CD8-positive, alpha-beta T cell (primary cell): ENCODE measurements at regions of chr10 and their contacts with region 1.

Region 1: DNA sequence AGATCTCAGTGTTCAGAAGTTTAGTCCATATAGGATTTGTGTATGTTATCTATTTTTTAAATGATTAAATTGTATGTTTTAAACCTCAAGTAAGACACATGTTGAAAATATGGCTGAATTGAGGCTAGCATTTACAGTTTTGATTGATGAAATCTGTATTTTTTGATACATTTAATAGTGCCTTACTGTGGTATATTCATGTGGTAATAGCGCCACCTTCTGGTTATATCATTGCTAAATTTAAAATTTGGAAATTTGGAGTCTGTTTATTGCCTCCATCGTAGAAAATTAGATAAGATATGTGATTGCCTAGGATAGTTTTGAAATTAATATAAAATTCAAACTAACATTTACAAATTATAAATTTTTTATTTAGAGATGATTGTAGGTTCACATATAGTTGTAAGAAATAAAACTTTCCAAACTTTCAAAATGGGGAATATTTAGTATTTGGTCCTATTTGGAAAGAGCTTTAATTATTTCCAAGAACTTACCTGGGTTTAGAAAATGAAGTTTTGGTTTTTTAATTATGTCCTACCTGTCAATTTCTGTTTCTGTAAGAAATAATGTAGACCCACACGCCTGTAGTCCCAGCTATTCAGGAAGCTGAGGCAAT is 19.1 kb upstream of the ARMS2 start:
- DNase-seq: peak in 3 of 9 experiments; percentile 19 to 73 (median 63)
- ATAC-seq: peak; percentile 54
- H3K4me3 ChIP-seq: no peak overlapping the region
- H3K4me3 Mint-ChIP-seq: no peak overlapping the region
- H3K27ac ChIP-seq: no peak overlapping the region
- H3K27ac Mint-ChIP-seq: no peak overlapping the region
- H3K4me1 ChIP-seq: no peaks in the 10 kb centered on the region
- H3K4me1 Mint-ChIP-seq: no peaks in the 10 kb centered on the region
- H3K27me3 ChIP-seq: no peaks in the 10 kb centered on the region
- H3K27me3 Mint-ChIP-seq: no peaks in the 10 kb centered on the region
- CTCF ChIP-seq: peak; percentile 90

Region 2: GRCh38 chr10:122342293-122343134 is 92.8 kb before region 1 on chr10:
- CTCF ChIA-PET with region 1: interaction called, 200 read pairs
- POLR2A ChIA-PET with region 1: interaction called, 4 read pairs
- intact Hi-C with region 1: loop called (anchors 1 kb)
- DNase-seq: peak; percentile 46 to 77 (median 66)
- ATAC-seq: peak; percentile 79
- H3K4me3 ChIP-seq: no peak overlapping the region
- H3K4me3 Mint-ChIP-seq: no peak overlapping the region
- H3K27ac ChIP-seq: no peak overlapping the region
- H3K27ac Mint-ChIP-seq: no peak overlapping the region
- H3K4me1 ChIP-seq: no peaks in the 10 kb centered on the region
- H3K4me1 Mint-ChIP-seq: peaks cover 3% of the 10 kb centered on the region
- H3K27me3 ChIP-seq: no peaks in the 10 kb centered on the region
- H3K27me3 Mint-ChIP-seq: no peaks in the 10 kb centered on the region
- CTCF ChIP-seq: peak; percentile 89

Region 3: GRCh38 chr10:122357685-122358084 is 77.6 kb before region 1 on chr10:
- CTCF ChIA-PET with region 1: interaction called, 27 read pairs
- POLR2A ChIA-PET with region 1: interaction called, 3 read pairs
- intact Hi-C with region 1: no loop called
- DNase-seq: no peak
- ATAC-seq: no peak
- H3K4me3 ChIP-seq: no peak overlapping the region
- H3K4me3 Mint-ChIP-seq: no peak overlapping the region
- H3K27ac ChIP-seq: no peak overlapping the region
- H3K27ac Mint-ChIP-seq: no peak overlapping the region
- H3K4me1 ChIP-seq: no peaks in the 10 kb centered on the region
- H3K4me1 Mint-ChIP-seq: no peaks in the 10 kb centered on the region
- H3K27me3 ChIP-seq: no peaks in the 10 kb centered on the region
- H3K27me3 Mint-ChIP-seq: no peaks in the 10 kb centered on the region
- CTCF ChIP-seq: no peak

Region 4: GRCh38 chr10:122419876-122420623 is 15.3 kb before region 1 on chr10:
- CTCF ChIA-PET with region 1: interaction called, 13 read pairs
- POLR2A ChIA-PET with region 1: interaction called, 5 read pairs
- intact Hi-C with region 1: loop called in 1 of 2 experiments (anchors 1 kb)
- DNase-seq: peak in 1 of 9 experiments; percentile 23
- ATAC-seq: no peak
- H3K4me3 ChIP-seq: no peak overlapping the region
- H3K4me3 Mint-ChIP-seq: no peak overlapping the region
- H3K27ac ChIP-seq: peak overlapping the region; percentile 26 to 66
- H3K27ac Mint-ChIP-seq: peak overlapping the region; percentile 88
- H3K4me1 ChIP-seq: peaks cover 96% of the 10 kb centered on the region
- H3K4me1 Mint-ChIP-seq: peaks cover 87% of the 10 kb centered on the region
- H3K27me3 ChIP-seq: no peaks in the 10 kb centered on the region
- H3K27me3 Mint-ChIP-seq: no peaks in the 10 kb centered on the region
- CTCF ChIP-seq: no peak

Region 5: GRCh38 chr10:122703439-122704118 is 268.3 kb after region 1 on chr10:
- CTCF ChIA-PET with region 1: no interaction called
- POLR2A ChIA-PET with region 1: no interaction called
- intact Hi-C with region 1: loop called (anchors 5 to 10 kb)
- DNase-seq: peak in 8 of 9 experiments; percentile 26 to 67 (median 48)
- ATAC-seq: peak; percentile 46
- H3K4me3 ChIP-seq: no peak overlapping the region
- H3K4me3 Mint-ChIP-seq: no peak overlapping the region
- H3K27ac ChIP-seq: no peak overlapping the region
- H3K27ac Mint-ChIP-seq: no peak overlapping the region
- H3K4me1 ChIP-seq: no peaks in the 10 kb centered on the region
- H3K4me1 Mint-ChIP-seq: peaks cover 3% of the 10 kb centered on the region
- H3K27me3 ChIP-seq: peaks cover 0 to 2% of the 10 kb centered on the region in 2 experiments
- H3K27me3 Mint-ChIP-seq: peaks cover 5% of the 10 kb centered on the region
- CTCF ChIP-seq: peak; percentile 67